ENCODE measurements at regions of chr19 and their contacts with region 1.

Region 1: DNA sequence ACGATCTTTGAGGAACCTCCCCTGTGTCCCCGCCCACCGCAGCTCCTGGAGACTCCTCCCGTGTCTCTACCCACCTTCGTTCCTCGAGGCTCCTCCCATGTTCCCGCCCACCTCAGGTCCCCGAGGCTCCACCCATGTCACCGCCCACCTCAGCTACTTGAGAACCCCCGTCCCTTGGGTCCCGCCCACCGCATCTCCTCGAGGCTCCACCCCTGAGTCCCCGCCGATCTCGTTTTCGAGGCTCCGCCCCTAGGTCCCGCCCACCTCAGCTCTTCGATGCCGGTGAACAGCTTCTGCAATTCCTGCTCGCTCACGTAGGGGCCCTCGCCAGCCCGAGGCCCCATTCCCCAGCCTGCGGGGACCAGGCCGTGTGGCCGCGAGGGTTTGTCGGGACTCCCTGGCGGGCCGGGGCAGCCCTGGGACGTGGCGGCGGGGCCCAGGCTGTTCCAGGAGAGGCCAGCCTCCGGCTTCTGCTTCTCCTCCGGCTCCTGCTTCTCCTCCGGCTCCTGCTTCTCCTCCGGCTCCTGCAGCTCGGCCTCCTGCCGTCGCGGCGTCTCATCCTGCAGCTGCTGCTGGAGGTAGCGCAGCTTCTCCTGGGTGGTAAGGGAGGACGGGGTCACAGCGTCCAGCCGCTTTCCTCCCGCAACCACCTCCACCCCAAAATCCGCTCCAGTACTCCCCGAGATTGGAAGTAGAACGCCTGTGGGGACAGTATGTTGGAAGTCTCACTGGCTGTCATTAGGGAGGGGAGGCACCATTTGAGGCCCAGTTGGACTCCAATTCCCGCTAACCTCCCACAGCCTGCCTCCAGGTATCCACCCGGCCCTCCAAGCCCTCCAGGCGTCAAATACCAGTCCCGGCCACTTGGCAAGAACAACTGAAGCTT is 16.7 kb downstream of the TSKS start:
- DNase-seq: peak; percentile 46
- ATAC-seq: peak; percentile 50
- H3K4me3 ChIP-seq: no peak overlapping the region
- H3K27ac ChIP-seq: no peak overlapping the region
- H3K4me1 ChIP-seq: no peaks in the 10 kb centered on the region
- H3K27me3 ChIP-seq: no peaks in the 10 kb centered on the region
- CTCF ChIP-seq: 0 out of 2 replicates have a peak, but pooled peaks have one; percentile 20

Region 2: GRCh38 chr19:49690656-49691242 is 55.7 kb before region 1 on chr19 and contains the start of gene CPT1C:
- CTCF ChIA-PET with region 1: no interaction called
- POLR2A ChIA-PET with region 1: no interaction called
- intact Hi-C with region 1: no loop called
- DNase-seq: peak; percentile 90
- ATAC-seq: peak; percentile 73
- H3K4me3 ChIP-seq: peak within 1 kb of the TSS; percentile 82
- H3K27ac ChIP-seq: no peak within 1 kb of the TSS
- H3K4me1 ChIP-seq: peaks cover 19% of the 10 kb centered on the region
- H3K27me3 ChIP-seq: no peaks in the 10 kb centered on the region
- CTCF ChIP-seq: no peak
- total RNA-seq, gene CPT1C: 11.5 and 13.6 TPM in 2 replicates

Region 3: GRCh38 chr19:49835562-49835961 is 89.1 kb after region 1 on chr19:
- CTCF ChIA-PET with region 1: interaction called, 17 read pairs
- POLR2A ChIA-PET with region 1: no interaction called
- intact Hi-C with region 1: no loop called
- DNase-seq: no peak
- ATAC-seq: no peak
- H3K4me3 ChIP-seq: no peak overlapping the region
- H3K27ac ChIP-seq: no peak overlapping the region
- H3K4me1 ChIP-seq: no peaks in the 10 kb centered on the region
- H3K27me3 ChIP-seq: no peaks in the 10 kb centered on the region
- CTCF ChIP-seq: no peak

Region 4: DNA sequence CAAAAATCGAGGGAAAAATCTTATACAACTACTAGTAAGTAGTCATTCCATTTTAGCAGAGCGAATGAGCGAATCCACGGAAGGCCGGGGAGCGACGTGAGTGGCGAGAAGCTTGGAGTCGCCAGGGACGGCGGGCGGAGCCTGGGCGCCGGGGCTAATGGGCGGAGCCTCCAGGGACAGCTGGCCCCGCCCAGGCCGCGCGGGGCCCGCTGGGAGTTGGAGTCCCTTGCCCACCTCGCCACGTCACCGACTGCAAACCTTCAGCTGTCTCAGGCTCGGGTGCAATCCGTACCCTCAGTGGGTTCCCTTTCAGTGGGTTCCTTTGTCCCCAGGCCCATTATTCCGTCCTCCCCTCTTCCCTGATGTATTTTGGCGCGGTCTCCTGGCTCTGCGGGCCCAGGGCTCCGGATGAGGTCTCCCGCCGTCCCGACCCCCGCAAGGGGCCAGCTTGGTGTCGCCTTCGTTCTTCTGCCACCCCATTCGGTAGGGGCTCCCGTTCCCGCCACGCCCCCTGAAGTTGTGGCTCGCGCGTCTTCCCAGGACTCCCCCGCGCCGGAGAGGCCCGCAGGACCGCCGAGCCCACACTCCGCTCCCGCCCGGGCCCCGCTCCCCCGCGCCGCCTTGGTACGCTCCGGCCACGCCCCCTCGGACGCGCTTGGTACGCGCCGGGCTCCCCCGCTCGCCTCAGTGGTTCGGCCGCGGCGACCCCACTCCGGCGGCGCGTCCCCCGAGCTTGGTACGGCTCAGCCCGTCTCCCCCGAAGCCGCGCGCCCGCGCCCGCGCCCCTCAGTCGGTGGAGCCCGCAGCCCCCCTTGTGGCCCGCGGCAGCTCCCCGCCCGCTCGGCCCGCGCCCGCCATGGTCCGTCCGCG is 104.3 kb after region 1 on chr19 and contains the start of gene PTOV1:
- CTCF ChIA-PET with region 1: no interaction called
- POLR2A ChIA-PET with region 1: no interaction called
- intact Hi-C with region 1: loop called (anchors 5 kb)
- DNase-seq: peak; percentile 97
- ATAC-seq: peak; percentile 75
- H3K4me3 ChIP-seq: peak within 1 kb of the TSS; percentile 86
- H3K27ac ChIP-seq: peak within 1 kb of the TSS; percentile 91
- H3K4me1 ChIP-seq: peaks cover 37% of the 10 kb centered on the region
- H3K27me3 ChIP-seq: no peaks in the 10 kb centered on the region
- CTCF ChIP-seq: no peak
- total RNA-seq, gene PTOV1: 138 and 148 TPM in 2 replicates